ENCODE measurements at regions of chr9 and their contacts with region 1.

Region 1: DNA sequence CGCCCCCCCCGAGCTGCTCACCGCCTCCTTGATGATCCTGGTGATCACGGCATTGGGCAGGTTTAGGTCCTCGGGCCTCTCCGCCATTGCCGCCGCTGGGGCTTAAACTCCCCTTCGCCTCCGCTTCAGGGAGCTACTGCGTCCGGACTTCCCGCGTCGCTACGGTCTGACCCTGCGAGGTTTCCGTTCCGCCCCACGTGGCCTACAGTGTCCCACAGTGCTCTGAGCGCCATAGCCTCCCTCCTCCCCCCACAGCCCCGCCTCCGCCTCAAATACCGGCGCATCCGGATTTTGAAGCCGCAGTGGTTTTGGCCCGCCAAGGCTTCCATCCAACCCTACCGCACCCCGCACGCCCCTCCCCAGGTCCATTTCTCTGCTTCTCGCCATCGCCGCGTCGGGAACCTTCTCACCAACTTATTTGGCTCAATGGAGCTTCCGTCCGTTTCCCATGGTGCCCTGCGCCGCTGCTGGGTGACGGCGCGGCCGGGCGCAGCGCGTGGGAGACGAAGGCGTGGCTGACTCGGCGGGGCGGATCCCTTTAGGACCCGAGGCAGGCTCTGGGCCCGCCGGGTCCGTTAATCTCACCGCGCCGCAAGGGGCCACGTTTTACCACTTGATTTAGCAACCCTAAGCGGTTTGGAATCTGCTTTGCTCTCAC is at the starts of genes C9orf43 and POLE3:
- DNase-seq: peak; percentile 94
- ATAC-seq: peak; percentile 89
- H3K4me3 Mint-ChIP-seq: peak within 1 kb of the TSS; percentile 98
- H3K27ac Mint-ChIP-seq: peak within 1 kb of the TSS; percentile 99
- H3K4me1 Mint-ChIP-seq: peaks cover 31% of the 10 kb centered on the region
- H3K27me3 Mint-ChIP-seq: no peaks in the 10 kb centered on the region
- CTCF ChIP-seq: no peak
- total RNA-seq, gene C9orf43: 0.76 and 1.2 TPM in 2 replicates
- total RNA-seq, gene POLE3: 48.0 and 55.5 TPM in 2 replicates

Region 2: DNA sequence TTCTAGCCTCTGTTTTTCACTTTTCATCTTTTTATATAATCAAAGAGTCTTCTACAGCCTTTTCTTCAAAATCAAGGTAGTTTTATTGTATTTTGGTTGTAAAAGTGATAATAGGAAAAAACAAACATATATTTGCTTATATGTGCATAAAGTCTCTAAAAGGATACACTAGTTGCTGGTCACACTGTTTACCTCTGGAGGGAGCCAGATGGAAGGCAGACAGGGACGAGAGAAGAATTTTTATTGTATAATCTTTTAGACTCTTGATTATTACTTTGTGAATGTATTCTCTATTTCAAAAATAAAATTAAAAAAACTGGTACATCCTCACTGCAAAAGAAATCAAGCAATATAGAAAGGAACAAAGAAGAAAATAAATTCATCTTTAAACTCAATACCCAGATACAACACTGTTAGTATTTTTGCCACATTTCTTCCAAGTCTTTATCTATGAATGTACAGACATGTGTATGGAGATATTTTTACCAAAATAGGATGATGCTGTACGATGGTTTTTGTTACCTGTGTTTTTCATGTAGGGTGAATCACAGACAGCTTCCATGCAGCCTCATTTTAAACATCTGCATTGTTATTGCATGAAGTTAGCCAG is 101.0 kb before region 1 on chr9:
- CTCF ChIA-PET with region 1: no interaction called
- POLR2A ChIA-PET with region 1: interaction called, 3 read pairs
- intact Hi-C with region 1: loop called (anchors 1 kb)
- DNase-seq: no peak
- ATAC-seq: no peak
- H3K4me3 Mint-ChIP-seq: no peak overlapping the region
- H3K27ac Mint-ChIP-seq: no peak overlapping the region
- H3K4me1 Mint-ChIP-seq: no peaks in the 10 kb centered on the region
- H3K27me3 Mint-ChIP-seq: peaks cover 2% of the 10 kb centered on the region
- CTCF ChIP-seq: no peak

Region 3: DNA sequence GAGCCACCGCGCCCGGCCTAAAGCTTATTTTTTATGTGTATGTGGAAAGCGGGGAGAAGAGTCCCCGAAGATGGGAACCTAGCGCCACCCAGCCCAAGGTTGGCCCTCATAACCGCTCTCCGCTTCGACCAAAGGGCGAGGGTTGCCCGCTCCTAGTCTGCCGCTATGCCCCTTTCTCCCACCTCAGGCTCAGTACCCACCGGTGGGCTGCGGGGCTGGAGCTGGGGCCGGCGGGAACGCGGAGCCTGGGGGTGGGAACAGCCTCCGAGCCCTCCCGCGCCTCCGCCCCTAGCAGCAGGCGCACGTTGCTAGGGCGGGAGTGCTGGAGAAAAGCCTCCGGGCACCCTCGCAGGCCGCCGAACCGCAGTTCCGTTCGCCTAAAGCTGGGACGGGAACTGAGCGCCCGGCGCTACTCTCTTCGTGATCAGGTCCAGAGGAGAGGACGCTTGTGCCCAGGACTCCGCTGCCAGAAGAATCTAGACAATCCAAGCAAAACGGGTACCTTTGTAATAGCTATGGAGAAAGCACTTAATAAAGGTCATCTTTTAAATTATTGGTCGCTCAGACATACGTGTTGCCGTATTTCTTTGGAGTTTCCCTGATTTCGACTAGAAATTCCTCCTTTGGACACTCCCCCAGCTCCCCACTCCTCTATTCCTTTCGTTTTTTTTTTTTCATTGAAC is 70.2 kb before region 1 on chr9 and contains the start of gene WDR31:
- CTCF ChIA-PET with region 1: no interaction called
- POLR2A ChIA-PET with region 1: interaction called, 3 read pairs
- intact Hi-C with region 1: loop called (anchors 1 kb)
- DNase-seq: peak; percentile 78
- ATAC-seq: peak; percentile 98
- H3K4me3 Mint-ChIP-seq: peak within 1 kb of the TSS; percentile 84
- H3K27ac Mint-ChIP-seq: peak within 1 kb of the TSS; percentile 74
- H3K4me1 Mint-ChIP-seq: peaks cover 11% of the 10 kb centered on the region
- H3K27me3 Mint-ChIP-seq: peaks cover 3% of the 10 kb centered on the region
- CTCF ChIP-seq: no peak
- total RNA-seq, gene WDR31: 0.73 and 1.6 TPM in 2 replicates

Region 4: GRCh38 chr9:113349445-113350094 is 60.8 kb before region 1 on chr9 and contains the start of gene BSPRY:
- CTCF ChIA-PET with region 1: interaction called, 3 read pairs
- POLR2A ChIA-PET with region 1: interaction called, 4 read pairs
- intact Hi-C with region 1: loop called (anchors 2 kb)
- DNase-seq: peak; percentile 39
- ATAC-seq: peak; percentile 59
- H3K4me3 Mint-ChIP-seq: peak within 1 kb of the TSS; percentile 82
- H3K27ac Mint-ChIP-seq: peak within 1 kb of the TSS; percentile 30
- H3K4me1 Mint-ChIP-seq: peaks cover 20% of the 10 kb centered on the region
- H3K27me3 Mint-ChIP-seq: peaks cover 7% of the 10 kb centered on the region
- CTCF ChIP-seq: no peak
- total RNA-seq, gene BSPRY: 1.1 and 1.3 TPM in 2 replicates

Region 5: GRCh38 chr9:113376634-113377567 is 33.4 kb before region 1 on chr9 and contains the start of gene HDHD3:
- CTCF ChIA-PET with region 1: no interaction called
- POLR2A ChIA-PET with region 1: interaction called, 23 read pairs
- intact Hi-C with region 1: loop called (anchors 1 kb)
- DNase-seq: peak; percentile 78
- ATAC-seq: peak; percentile 90
- H3K4me3 Mint-ChIP-seq: peak within 1 kb of the TSS; percentile 92
- H3K27ac Mint-ChIP-seq: peak within 1 kb of the TSS; percentile 81
- H3K4me1 Mint-ChIP-seq: peaks cover 32% of the 10 kb centered on the region
- H3K27me3 Mint-ChIP-seq: no peaks in the 10 kb centered on the region
- CTCF ChIP-seq: no peak
- total RNA-seq, gene HDHD3: 23.4 and 23.9 TPM in 2 replicates

Region 6: GRCh38 chr9:113516840-113517577 is 106.7 kb after region 1 on chr9:
- CTCF ChIA-PET with region 1: no interaction called
- POLR2A ChIA-PET with region 1: interaction called, 4 read pairs
- intact Hi-C with region 1: loop called (anchors 5 kb)
- DNase-seq: peak; percentile 26
- ATAC-seq: peak; percentile 95
- H3K4me3 Mint-ChIP-seq: peak overlapping the region; percentile 62
- H3K27ac Mint-ChIP-seq: peak overlapping the region; percentile 83
- H3K4me1 Mint-ChIP-seq: peaks cover 29% of the 10 kb centered on the region
- H3K27me3 Mint-ChIP-seq: no peaks in the 10 kb centered on the region
- CTCF ChIP-seq: no peak